ENCODE measurements at regions of chr10 and their contacts with region 1.

Region 1: DNA sequence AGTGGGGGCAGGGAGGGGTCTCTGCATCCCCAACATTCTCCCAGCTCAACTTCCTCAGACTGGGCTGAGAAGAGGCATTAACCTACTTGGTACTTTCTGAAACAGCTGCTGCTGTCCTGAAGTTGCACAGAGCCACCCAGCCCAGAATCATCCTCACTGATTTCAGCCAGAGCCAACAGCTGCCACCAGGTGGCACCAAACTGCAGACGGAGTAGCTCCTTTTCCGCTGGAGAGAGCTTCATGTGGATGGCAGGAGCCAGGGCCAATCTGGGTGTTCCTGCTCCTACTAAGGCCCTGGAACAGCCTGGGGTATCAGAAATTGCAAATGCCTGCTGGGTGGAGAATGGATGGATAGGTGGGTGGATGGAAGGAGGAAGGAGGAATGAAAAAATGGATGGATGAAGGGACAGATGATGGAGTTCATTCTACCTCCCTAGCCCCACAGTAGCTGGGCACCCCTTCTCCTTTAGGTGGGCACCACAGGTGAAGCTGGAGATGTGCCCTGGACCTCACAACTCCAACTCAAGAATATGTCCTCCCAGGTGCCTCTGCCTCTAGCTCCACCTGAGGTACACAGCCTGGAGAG is 11.8 kb upstream of the DRGX start:
- DNase-seq: peak; percentile 81 to 85 (median 82)
- ATAC-seq: peak; percentile 94
- H3K4me3 ChIP-seq: no peak overlapping the region
- H3K27ac ChIP-seq: no peak overlapping the region
- H3K4me1 ChIP-seq: no peaks in the 10 kb centered on the region
- H3K27me3 ChIP-seq: peaks cover 4 to 46% of the 10 kb centered on the region in 2 experiments
- CTCF ChIP-seq: peak; percentile 93 to 95 (median 94)
- EP300 ChIP-seq: no peak
- POLR2A ChIP-seq: no peak
- RAD21 ChIP-seq: peak; percentile 84 to 94

Region 2: GRCh38 chr10:48981310-48981907 is 426.2 kb before region 1 on chr10:
- CTCF ChIA-PET with region 1: interaction called, 4 read pairs
- POLR2A ChIA-PET with region 1: no interaction called
- in situ Hi-C with region 1: no loop called
- intact Hi-C with region 1: loop called (anchors 5 kb)
- DNase-seq: peak; percentile 84 to 93 (median 88)
- ATAC-seq: peak; percentile 98
- H3K4me3 ChIP-seq: no peak overlapping the region
- H3K27ac ChIP-seq: no peak overlapping the region
- H3K4me1 ChIP-seq: peaks cover 4 to 9% of the 10 kb centered on the region in 2 experiments; a peak in 2 of 5 replicates
- H3K27me3 ChIP-seq: peaks cover 0 to 13% of the 10 kb centered on the region in 2 experiments; a peak in 2 of 5 replicates
- CTCF ChIP-seq: peak; percentile 93 to 97 (median 94)
- EP300 ChIP-seq: no peak
- POLR2A ChIP-seq: no peak
- RAD21 ChIP-seq: peak; percentile 90 to 93

Region 3: DNA sequence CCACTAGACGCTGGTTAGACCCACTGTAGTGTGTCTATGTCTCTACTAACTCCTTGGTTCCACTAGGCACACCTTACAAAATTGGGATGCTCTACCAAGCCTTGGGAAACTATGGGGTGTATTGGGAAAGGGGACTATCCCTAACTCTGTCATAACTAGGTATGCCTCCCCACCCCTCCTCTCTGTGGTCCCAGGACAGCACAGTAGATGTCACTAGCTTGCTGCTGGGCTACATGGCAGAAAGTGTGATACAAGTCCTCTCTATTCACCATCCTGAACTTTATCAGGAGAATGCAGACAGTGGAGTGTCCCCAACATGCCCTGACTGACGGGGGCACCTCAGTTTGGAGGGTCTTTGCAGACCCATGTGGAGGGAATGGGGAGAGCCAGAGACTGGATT is 189.2 kb before region 1 on chr10:
- CTCF ChIA-PET with region 1: no interaction called
- POLR2A ChIA-PET with region 1: no interaction called
- in situ Hi-C with region 1: no loop called
- intact Hi-C with region 1: loop called (anchors 5 kb)
- DNase-seq: peak in 2 of 4 experiments; percentile 43 to 48
- ATAC-seq: peak; percentile 86
- H3K4me3 ChIP-seq: no peak overlapping the region
- H3K27ac ChIP-seq: no peak overlapping the region
- H3K4me1 ChIP-seq: peaks cover 4 to 9% of the 10 kb centered on the region in 2 experiments; a peak in 3 of 5 replicates
- H3K27me3 ChIP-seq: no peaks in the 10 kb centered on the region
- CTCF ChIP-seq: peak; percentile 37 to 54 (median 47)
- EP300 ChIP-seq: no peak
- POLR2A ChIP-seq: no peak
- RAD21 ChIP-seq: peak; percentile 21 to 60; a peak in 2 of 4 replicates

Region 4: DNA sequence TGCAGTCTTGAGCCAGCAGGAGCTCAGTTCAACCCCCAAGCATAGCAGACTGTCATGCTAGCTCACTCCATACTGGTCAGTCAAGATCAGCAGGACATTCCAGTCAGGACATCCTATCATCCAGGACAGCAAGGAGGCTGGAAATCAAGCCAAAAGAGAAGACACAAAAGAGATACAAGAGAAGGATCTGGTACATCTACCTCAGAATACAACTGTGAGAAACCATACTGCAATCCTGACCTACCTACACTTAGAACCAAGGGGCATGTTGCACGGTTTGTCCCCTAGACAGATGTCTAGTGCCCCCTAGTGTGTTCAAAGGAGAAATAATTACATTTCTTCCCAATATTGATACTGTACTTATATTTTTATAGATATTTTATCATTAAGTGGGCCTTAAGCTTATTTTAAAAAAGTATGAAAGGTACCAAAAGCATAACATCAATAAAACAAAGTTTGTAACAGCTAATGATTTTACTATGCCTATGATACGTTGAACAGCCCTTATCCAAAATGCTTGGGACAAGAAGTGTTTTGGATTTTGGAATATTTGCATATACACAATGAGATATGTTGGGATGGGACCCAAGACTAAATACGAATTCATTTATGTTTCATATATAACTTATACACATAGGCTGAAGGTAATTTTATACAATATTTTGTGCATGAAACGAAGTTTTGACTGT is 104.6 kb after region 1 on chr10:
- CTCF ChIA-PET with region 1: interaction called, 16 read pairs
- POLR2A ChIA-PET with region 1: interaction called, 4 read pairs
- in situ Hi-C with region 1: loop called (anchors 5 kb)
- intact Hi-C with region 1: loop called (anchors 1 kb)
- DNase-seq: peak in 3 of 4 experiments; percentile 44 to 51 (median 46)
- ATAC-seq: peak; percentile 92
- H3K4me3 ChIP-seq: no peak overlapping the region
- H3K27ac ChIP-seq: no peak overlapping the region
- H3K4me1 ChIP-seq: no peaks in the 10 kb centered on the region
- H3K27me3 ChIP-seq: no peaks in the 10 kb centered on the region
- CTCF ChIP-seq: peak; percentile 73 to 92 (median 75)
- EP300 ChIP-seq: no peak
- POLR2A ChIP-seq: no peak
- RAD21 ChIP-seq: peak; percentile 87 to 88

Region 5: GRCh38 chr10:49518982-49519578 is 111.4 kb after region 1 on chr10:
- CTCF ChIA-PET with region 1: interaction called, 23 read pairs
- POLR2A ChIA-PET with region 1: interaction called, 3 read pairs
- in situ Hi-C with region 1: loop called (anchors 5 kb)
- intact Hi-C with region 1: no loop called
- DNase-seq: peak; percentile 71 to 81 (median 80)
- ATAC-seq: peak; percentile 94
- H3K4me3 ChIP-seq: no peak overlapping the region
- H3K27ac ChIP-seq: no peak overlapping the region
- H3K4me1 ChIP-seq: no peaks in the 10 kb centered on the region
- H3K27me3 ChIP-seq: no peaks in the 10 kb centered on the region
- CTCF ChIP-seq: peak; percentile 74 to 88 (median 78)
- EP300 ChIP-seq: no peak
- POLR2A ChIP-seq: no peak
- RAD21 ChIP-seq: peak; percentile 83 to 88

Region 6: DNA sequence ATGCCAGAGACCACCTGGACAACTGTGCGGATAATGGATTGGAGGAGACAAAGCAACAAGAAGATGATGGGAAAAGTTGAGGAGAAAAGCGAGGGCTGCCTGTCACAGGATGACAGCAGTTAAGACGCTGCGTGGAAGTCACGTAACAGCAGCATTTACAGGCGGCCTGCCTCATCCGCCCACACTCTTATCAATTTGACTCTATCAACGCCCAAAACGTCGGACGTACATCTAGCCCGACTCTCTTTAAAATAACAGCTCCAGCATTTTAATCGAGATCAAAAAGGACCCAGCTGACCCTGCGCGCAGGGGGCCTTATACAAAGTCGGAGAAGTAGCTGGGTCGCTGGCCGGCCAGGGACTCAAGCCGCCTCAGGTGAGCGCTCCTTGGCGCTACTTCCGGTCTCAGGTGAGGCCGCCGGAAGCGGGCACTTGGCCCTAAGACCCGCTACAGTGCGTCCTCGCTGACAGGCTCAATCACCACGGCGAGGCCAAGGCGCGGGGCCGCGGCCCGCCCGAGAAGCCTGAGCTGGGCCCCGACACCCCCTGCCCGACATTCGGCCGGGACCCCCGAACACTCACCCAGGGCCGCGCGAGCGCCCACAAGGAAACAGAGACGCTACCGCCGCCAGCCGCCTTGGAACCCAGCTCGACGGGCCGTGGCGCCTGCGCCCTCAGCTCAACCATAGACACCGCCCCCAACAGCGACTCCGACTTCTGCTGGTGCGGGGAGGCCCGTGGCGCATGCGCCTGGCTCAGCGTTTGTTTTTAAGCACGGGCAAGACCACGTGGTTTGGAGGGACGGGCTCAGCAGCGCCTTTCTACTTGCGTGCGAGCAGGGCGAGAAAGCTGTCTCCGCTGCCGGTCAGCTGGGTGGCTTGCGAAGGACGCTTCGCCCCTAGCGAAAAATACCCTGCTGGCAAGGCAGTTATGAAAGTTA is 131.0 kb after region 1 on chr10 and contains the start of gene ERCC6:
- CTCF ChIA-PET with region 1: no interaction called
- POLR2A ChIA-PET with region 1: no interaction called
- in situ Hi-C with region 1: no loop called
- intact Hi-C with region 1: no loop called
- DNase-seq: peak; percentile 98 to 99 (median 98)
- ATAC-seq: peak; percentile 97
- H3K4me3 ChIP-seq: peak within 1 kb of the TSS; percentile 55
- H3K27ac ChIP-seq: peak within 1 kb of the TSS; percentile 72
- H3K4me1 ChIP-seq: peaks cover 20 to 27% of the 10 kb centered on the region in 2 experiments; a peak in 4 of 5 replicates
- H3K27me3 ChIP-seq: no peaks in the 10 kb centered on the region
- CTCF ChIP-seq: peak in 2 of 3 experiments; percentile 24 to 26; a peak in 2 of 6 replicates
- EP300 ChIP-seq: no peak
- POLR2A ChIP-seq: peak; percentile 93
- RAD21 ChIP-seq: no peak
- polyA plus RNA-seq, gene ERCC6: 7.8 to 13.4 TPM

Region 7: GRCh38 chr10:49741108-49741995 is 333.7 kb after region 1 on chr10:
- CTCF ChIA-PET with region 1: no interaction called
- POLR2A ChIA-PET with region 1: no interaction called
- in situ Hi-C with region 1: no loop called
- intact Hi-C with region 1: no loop called
- DNase-seq: no peak
- ATAC-seq: peak; percentile 7; the same call in 2 of the 3 replicates
- H3K4me3 ChIP-seq: no peak overlapping the region
- H3K27ac ChIP-seq: no peak overlapping the region
- H3K4me1 ChIP-seq: peaks cover 0 to 12% of the 10 kb centered on the region in 2 experiments; a peak in 1 of 5 replicates
- H3K27me3 ChIP-seq: peaks cover 4 to 44% of the 10 kb centered on the region in 2 experiments; a peak in 4 of 5 replicates
- CTCF ChIP-seq: no peak
- EP300 ChIP-seq: no peak
- POLR2A ChIP-seq: no peak
- RAD21 ChIP-seq: no peak

Measured in K562 (cell line).